Activated CD4-positive, alpha-beta memory T cell treated with anti-CD3 and anti-CD28 coated beads for 36 hours (primary cell): ENCODE measurements at regions of chr3 and their contacts with region 1.

Region 1: GRCh38 chr3:66195347-66195783 is 25.4 kb upstream of the SLC25A26 start:
- DNase-seq: peak; percentile 30
- H3K4me3 Mint-ChIP-seq: no peak overlapping the region
- H3K27ac Mint-ChIP-seq: no peak overlapping the region
- H3K4me1 Mint-ChIP-seq: peaks cover 2% of the 10 kb centered on the region
- H3K27me3 Mint-ChIP-seq: peaks cover 18% of the 10 kb centered on the region

Region 2: GRCh38 chr3:65785065-65785645 is 410.2 kb before region 1 on chr3:
- CTCF ChIA-PET with region 1: no interaction called
- POLR2A ChIA-PET with region 1: no interaction called
- intact Hi-C with region 1: loop called (anchors 5 kb)
- DNase-seq: no peak
- H3K4me3 Mint-ChIP-seq: no peak overlapping the region
- H3K27ac Mint-ChIP-seq: no peak overlapping the region
- H3K4me1 Mint-ChIP-seq: no peaks in the 10 kb centered on the region
- H3K27me3 Mint-ChIP-seq: no peaks in the 10 kb centered on the region